ENCODE measurements at regions of chr13 and their contacts with region 1.

Region 1: GRCh38 chr13:97855570-97856303 is 97.7 kb upstream of the IPO5 start:
- DNase-seq: peak; percentile 50 to 66
- H3K4me3 ChIP-seq: no peak overlapping the region
- H3K4me3 Mint-ChIP-seq: no peak overlapping the region
- H3K27ac Mint-ChIP-seq: no peak overlapping the region
- H3K4me1 ChIP-seq: 0 out of 2 replicates have a peak, but pooled peaks cover 3% of the 10 kb centered on the region
- H3K4me1 Mint-ChIP-seq: no peaks in the 10 kb centered on the region
- H3K27me3 ChIP-seq: no peaks in the 10 kb centered on the region
- H3K27me3 Mint-ChIP-seq: peaks cover 3% of the 10 kb centered on the region
- CTCF ChIP-seq: peak; percentile 81 to 88

Region 2: GRCh38 chr13:97719736-97720135 is 136.0 kb before region 1 on chr13:
- CTCF ChIA-PET with region 1: no interaction called
- POLR2A ChIA-PET with region 1: no interaction called
- intact Hi-C with region 1: no loop called
- DNase-seq: no peak
- H3K4me3 ChIP-seq: no peak overlapping the region
- H3K4me3 Mint-ChIP-seq: no peak overlapping the region
- H3K27ac Mint-ChIP-seq: no peak overlapping the region
- H3K4me1 ChIP-seq: no peaks in the 10 kb centered on the region
- H3K4me1 Mint-ChIP-seq: no peaks in the 10 kb centered on the region
- H3K27me3 ChIP-seq: no peaks in the 10 kb centered on the region
- H3K27me3 Mint-ChIP-seq: peaks cover 2% of the 10 kb centered on the region
- CTCF ChIP-seq: no peak

Region 3: GRCh38 chr13:97911311-97912128 is 55.8 kb after region 1 on chr13:
- CTCF ChIA-PET with region 1: interaction called, 6 read pairs
- POLR2A ChIA-PET with region 1: no interaction called
- intact Hi-C with region 1: loop called (anchors 1 kb)
- DNase-seq: peak in 1 of 2 experiments; percentile 40
- H3K4me3 ChIP-seq: no peak overlapping the region
- H3K4me3 Mint-ChIP-seq: no peak overlapping the region
- H3K27ac Mint-ChIP-seq: no peak overlapping the region
- H3K4me1 ChIP-seq: no peaks in the 10 kb centered on the region
- H3K4me1 Mint-ChIP-seq: no peaks in the 10 kb centered on the region
- H3K27me3 ChIP-seq: no peaks in the 10 kb centered on the region
- H3K27me3 Mint-ChIP-seq: peaks cover 14% of the 10 kb centered on the region
- CTCF ChIP-seq: peak; percentile 53 to 54

Region 4: GRCh38 chr13:97975848-97976609 is 120.3 kb after region 1 on chr13:
- CTCF ChIA-PET with region 1: no interaction called
- POLR2A ChIA-PET with region 1: no interaction called
- intact Hi-C with region 1: loop called (anchors 2 kb)
- DNase-seq: peak; percentile 93 to 97
- H3K4me3 ChIP-seq: peak overlapping the region; percentile 66
- H3K4me3 Mint-ChIP-seq: peak overlapping the region; percentile 98
- H3K27ac Mint-ChIP-seq: peak overlapping the region; percentile 97
- H3K4me1 ChIP-seq: peaks cover 28% of the 10 kb centered on the region
- H3K4me1 Mint-ChIP-seq: peaks cover 6% of the 10 kb centered on the region
- H3K27me3 ChIP-seq: no peaks in the 10 kb centered on the region
- H3K27me3 Mint-ChIP-seq: no peaks in the 10 kb centered on the region
- CTCF ChIP-seq: no peak

Region 5: GRCh38 chr13:98014766-98015165 is 159.0 kb after region 1 on chr13:
- CTCF ChIA-PET with region 1: no interaction called
- POLR2A ChIA-PET with region 1: no interaction called
- intact Hi-C with region 1: loop called (anchors 5 kb)
- DNase-seq: no peak
- H3K4me3 ChIP-seq: no peak overlapping the region
- H3K4me3 Mint-ChIP-seq: no peak overlapping the region
- H3K27ac Mint-ChIP-seq: no peak overlapping the region
- H3K4me1 ChIP-seq: no peaks in the 10 kb centered on the region
- H3K4me1 Mint-ChIP-seq: no peaks in the 10 kb centered on the region
- H3K27me3 ChIP-seq: no peaks in the 10 kb centered on the region
- H3K27me3 Mint-ChIP-seq: no peaks in the 10 kb centered on the region
- CTCF ChIP-seq: no peak

Region 6: DNA sequence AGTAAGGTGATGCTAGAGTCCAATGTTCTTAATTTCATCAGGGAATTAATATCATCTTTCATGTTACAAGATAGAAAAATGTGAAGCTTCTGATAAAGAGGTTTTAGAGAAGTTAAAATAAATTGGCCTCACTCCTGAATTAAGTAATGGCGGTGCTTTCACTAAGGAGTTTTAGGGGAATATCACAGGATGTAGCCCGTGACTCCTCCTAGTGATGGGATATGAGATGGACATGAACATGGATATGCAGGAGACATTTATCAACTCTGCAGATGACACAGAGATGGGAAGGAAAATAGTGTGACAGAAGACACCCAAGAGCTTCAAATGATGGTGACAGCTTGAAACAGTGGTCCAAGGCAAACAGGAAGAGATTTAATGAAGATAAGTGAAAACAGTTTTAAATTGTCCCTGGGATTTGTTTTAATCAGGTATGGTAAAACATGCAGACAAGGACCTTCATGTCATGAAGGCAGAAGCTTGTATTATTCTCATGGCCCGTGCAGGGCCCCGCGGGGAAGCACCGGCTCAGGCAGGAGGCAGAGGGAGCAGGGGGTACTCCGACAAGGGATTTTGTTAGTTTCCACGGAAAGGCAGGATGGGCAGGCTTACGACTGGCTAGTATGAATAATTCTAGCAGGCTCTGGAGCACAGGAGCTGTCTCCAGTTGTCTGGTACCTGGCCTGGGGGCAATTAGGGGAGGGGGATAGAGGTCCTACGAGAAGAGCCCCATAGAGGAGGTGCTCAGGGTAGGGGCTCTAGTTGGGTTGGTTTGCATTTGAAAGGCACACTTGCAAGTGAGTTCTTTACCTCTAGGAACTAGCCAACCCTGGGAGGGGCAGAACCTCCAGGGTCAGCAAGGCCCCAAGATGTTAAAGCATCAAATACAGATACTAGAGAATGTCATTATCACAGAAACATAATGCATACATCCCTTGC is 248.5 kb after region 1 on chr13:
- CTCF ChIA-PET with region 1: no interaction called
- POLR2A ChIA-PET with region 1: no interaction called
- intact Hi-C with region 1: loop called (anchors 1 kb)
- DNase-seq: peak; percentile 23 to 36
- H3K4me3 ChIP-seq: no peak overlapping the region
- H3K4me3 Mint-ChIP-seq: no peak overlapping the region
- H3K27ac Mint-ChIP-seq: no peak overlapping the region
- H3K4me1 ChIP-seq: no peaks in the 10 kb centered on the region
- H3K4me1 Mint-ChIP-seq: no peaks in the 10 kb centered on the region
- H3K27me3 ChIP-seq: no peaks in the 10 kb centered on the region
- H3K27me3 Mint-ChIP-seq: no peaks in the 10 kb centered on the region
- CTCF ChIP-seq: peak; percentile 45 to 57

Region 7: GRCh38 chr13:98445340-98446233 is 589.9 kb after region 1 on chr13:
- CTCF ChIA-PET with region 1: no interaction called
- POLR2A ChIA-PET with region 1: no interaction called
- intact Hi-C with region 1: loop called (anchors 5 kb)
- DNase-seq: peak; percentile 77 to 88
- H3K4me3 ChIP-seq: no peak overlapping the region
- H3K4me3 Mint-ChIP-seq: no peak overlapping the region
- H3K27ac Mint-ChIP-seq: peak overlapping the region; percentile 77
- H3K4me1 ChIP-seq: no peaks in the 10 kb centered on the region
- H3K4me1 Mint-ChIP-seq: peaks cover 14% of the 10 kb centered on the region
- H3K27me3 ChIP-seq: no peaks in the 10 kb centered on the region
- H3K27me3 Mint-ChIP-seq: no peaks in the 10 kb centered on the region
- CTCF ChIP-seq: peak; percentile 97 to 99

Region 8: DNA sequence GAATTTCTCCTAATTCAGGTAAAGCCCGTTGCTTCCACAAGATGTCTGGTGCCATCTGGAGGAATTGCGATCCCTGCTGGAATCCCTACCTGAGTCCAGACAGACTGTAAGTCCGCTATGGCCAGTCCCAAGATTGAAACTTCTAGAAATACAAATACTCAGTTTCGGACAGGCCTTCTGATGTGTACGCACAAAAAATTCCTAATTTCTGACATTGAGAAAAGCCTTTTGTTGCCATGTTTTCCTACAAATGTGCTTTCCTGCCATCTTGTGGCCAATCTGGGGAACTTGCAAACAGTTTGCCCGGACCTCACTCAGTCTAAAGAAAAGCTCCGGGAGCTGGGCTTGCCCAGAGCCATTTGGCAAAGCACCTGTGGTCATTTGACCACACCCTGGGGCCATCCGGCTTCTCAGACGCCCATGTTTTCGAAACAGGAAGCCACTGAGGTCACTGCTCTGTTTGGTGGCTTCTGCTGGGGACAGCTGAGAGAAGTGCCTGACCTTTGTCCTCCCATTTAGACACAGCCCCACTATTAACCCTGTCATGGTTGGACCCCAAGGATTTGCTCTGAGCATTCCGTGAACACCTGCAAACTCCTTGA is 817.3 kb after region 1 on chr13:
- CTCF ChIA-PET with region 1: no interaction called
- POLR2A ChIA-PET with region 1: no interaction called
- intact Hi-C with region 1: loop called (anchors 1 kb)
- DNase-seq: peak; percentile 87 to 91
- H3K4me3 ChIP-seq: no peak overlapping the region
- H3K4me3 Mint-ChIP-seq: peak overlapping the region; percentile 14
- H3K27ac Mint-ChIP-seq: peak overlapping the region; percentile 23
- H3K4me1 ChIP-seq: peaks cover 17% of the 10 kb centered on the region
- H3K4me1 Mint-ChIP-seq: peaks cover 8% of the 10 kb centered on the region
- H3K27me3 ChIP-seq: no peaks in the 10 kb centered on the region
- H3K27me3 Mint-ChIP-seq: no peaks in the 10 kb centered on the region
- CTCF ChIP-seq: peak; percentile 88